B cell (primary cell): ENCODE measurements at regions of chrX and their contacts with region 1.

Region 1: GRCh38 chrX:15854712-15855567 is at the start of gene AP1S2:
- DNase-seq: peak; percentile 95
- ATAC-seq: peak; percentile 90
- H3K4me3 ChIP-seq: peak within 1 kb of the TSS; percentile 66 to 79 (median 78)
- H3K4me3 Mint-ChIP-seq: peak within 1 kb of the TSS; percentile 97
- H3K27ac ChIP-seq: peak within 1 kb of the TSS; percentile 94 to 97
- H3K27ac Mint-ChIP-seq: peak within 1 kb of the TSS; percentile 99
- H3K4me1 ChIP-seq: peaks cover 18 to 25% of the 10 kb centered on the region in 2 donors
- H3K4me1 Mint-ChIP-seq: peaks cover 36% of the 10 kb centered on the region
- H3K27me3 ChIP-seq: no peaks in the 10 kb centered on the region
- H3K27me3 Mint-ChIP-seq: no peaks in the 10 kb centered on the region
- CTCF ChIP-seq: no peak
- total RNA-seq, gene AP1S2: 33.9 and 37.8 TPM in 2 replicates

Region 2: GRCh38 chrX:15335135-15336022 is 519.6 kb before region 1 on chrX and contains the start of gene PIGA:
- CTCF ChIA-PET with region 1: no interaction called
- POLR2A ChIA-PET with region 1: no interaction called
- intact Hi-C with region 1: loop called (anchors 2 kb)
- DNase-seq: peak; percentile 94
- ATAC-seq: peak; percentile 91
- H3K4me3 ChIP-seq: peak within 1 kb of the TSS; percentile 65 to 93 (median 74)
- H3K4me3 Mint-ChIP-seq: peak within 1 kb of the TSS; percentile 92
- H3K27ac ChIP-seq: peak within 1 kb of the TSS; percentile 84 to 95
- H3K27ac Mint-ChIP-seq: peak within 1 kb of the TSS; percentile 94
- H3K4me1 ChIP-seq: peaks cover 4 to 15% of the 10 kb centered on the region in 2 donors
- H3K4me1 Mint-ChIP-seq: peaks cover 20% of the 10 kb centered on the region
- H3K27me3 ChIP-seq: peaks cover 0 to 15% (median 1%) of the 10 kb centered on the region in 4 experiments
- H3K27me3 Mint-ChIP-seq: peaks cover 8% of the 10 kb centered on the region
- CTCF ChIP-seq: no peak
- total RNA-seq, gene PIGA: 25.7 and 26.0 TPM in 2 replicates

Region 3: DNA sequence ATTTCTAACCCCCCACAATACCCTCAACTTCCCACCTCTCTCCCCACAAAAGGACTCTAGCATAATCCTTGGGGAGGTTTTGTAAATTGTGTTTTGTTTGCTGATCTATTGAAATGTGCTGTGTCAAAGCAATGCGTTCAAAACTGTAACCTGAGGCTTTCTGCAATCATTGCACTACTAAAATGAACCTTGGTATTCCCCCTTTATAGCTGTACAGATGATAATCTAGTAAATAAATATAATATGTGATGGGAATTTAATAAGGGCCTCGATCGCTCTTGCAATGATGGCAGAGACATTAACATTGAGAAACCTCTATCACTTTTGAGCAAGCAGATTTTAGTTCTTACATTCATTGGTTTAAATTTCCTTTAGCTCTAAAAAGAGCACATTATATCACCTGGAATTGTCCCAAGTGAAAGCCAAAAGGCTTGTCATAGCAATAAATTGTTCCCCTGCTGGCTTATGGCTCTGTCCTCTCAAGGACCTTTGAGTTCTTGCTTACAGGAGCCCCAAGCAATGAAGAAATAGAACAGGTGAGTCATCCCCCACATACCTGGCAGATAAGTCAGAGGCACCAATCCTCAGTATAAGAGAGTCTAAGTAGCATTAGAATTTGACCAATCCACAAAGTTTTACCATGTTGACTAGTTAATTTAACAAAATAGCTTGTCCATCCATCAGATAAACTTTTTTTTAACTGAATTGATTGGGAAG is 235.7 kb before region 1 on chrX:
- CTCF ChIA-PET with region 1: no interaction called
- POLR2A ChIA-PET with region 1: no interaction called
- intact Hi-C with region 1: no loop called
- DNase-seq: no peak
- ATAC-seq: no peak
- H3K4me3 ChIP-seq: no peak overlapping the region
- H3K4me3 Mint-ChIP-seq: no peak overlapping the region
- H3K27ac ChIP-seq: no peak overlapping the region
- H3K27ac Mint-ChIP-seq: no peak overlapping the region
- H3K4me1 ChIP-seq: no peaks in the 10 kb centered on the region
- H3K4me1 Mint-ChIP-seq: no peaks in the 10 kb centered on the region
- H3K27me3 ChIP-seq: peaks cover 0 to 5% (median 0%) of the 10 kb centered on the region in 4 experiments
- H3K27me3 Mint-ChIP-seq: no peaks in the 10 kb centered on the region
- CTCF ChIP-seq: no peak

Region 4: GRCh38 chrX:15631637-15632036 is 223.3 kb before region 1 on chrX:
- CTCF ChIA-PET with region 1: no interaction called
- POLR2A ChIA-PET with region 1: no interaction called
- intact Hi-C with region 1: no loop called
- DNase-seq: no peak
- ATAC-seq: no peak
- H3K4me3 ChIP-seq: no peak overlapping the region
- H3K4me3 Mint-ChIP-seq: no peak overlapping the region
- H3K27ac ChIP-seq: no peak overlapping the region
- H3K27ac Mint-ChIP-seq: no peak overlapping the region
- H3K4me1 ChIP-seq: no peaks in the 10 kb centered on the region
- H3K4me1 Mint-ChIP-seq: no peaks in the 10 kb centered on the region
- H3K27me3 ChIP-seq: no peaks in the 10 kb centered on the region
- H3K27me3 Mint-ChIP-seq: peaks cover 11% of the 10 kb centered on the region
- CTCF ChIP-seq: no peak

Region 5: DNA sequence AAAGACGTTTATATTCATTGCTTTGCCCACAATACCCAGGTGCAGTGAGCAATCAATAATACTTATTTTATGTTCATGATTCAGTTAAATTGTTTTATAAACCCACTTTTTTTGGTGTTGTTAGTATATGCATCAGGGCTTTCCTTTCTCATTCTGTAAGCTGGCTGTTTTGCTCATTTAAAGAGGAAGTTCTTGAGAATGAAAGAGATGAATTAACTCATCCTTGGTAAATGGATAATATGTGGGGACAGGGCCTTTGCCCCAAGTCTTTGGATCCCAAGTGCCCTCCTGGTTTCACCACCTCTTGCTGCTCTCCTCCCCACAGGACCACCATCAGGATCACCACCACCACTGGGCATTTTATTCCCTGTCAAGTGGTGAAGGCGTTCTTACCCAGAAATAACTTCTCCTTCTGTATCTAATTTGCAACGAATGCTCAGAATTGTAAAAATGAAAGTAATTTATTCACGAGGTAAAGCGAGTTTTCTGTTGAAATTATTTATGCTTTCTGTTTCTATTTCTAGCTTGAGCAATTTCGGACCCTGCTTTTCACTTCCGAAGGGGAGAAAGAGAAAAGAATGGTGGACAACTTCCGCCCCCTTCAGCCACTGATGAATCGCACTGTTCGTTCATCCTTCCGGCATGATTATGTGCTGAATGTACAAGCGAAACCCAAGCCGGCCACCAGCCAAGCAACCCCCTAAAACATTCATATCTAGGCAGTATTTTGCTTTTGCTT is 72.8 kb before region 1 on chrX:
- CTCF ChIA-PET with region 1: no interaction called
- POLR2A ChIA-PET with region 1: interaction called, 5 read pairs
- intact Hi-C with region 1: loop called (anchors 2 kb)
- DNase-seq: peak; percentile 52
- ATAC-seq: peak; percentile 70
- H3K4me3 ChIP-seq: peak overlapping the region in 4 of 5 experiments; percentile 28 to 65 (median 56)
- H3K4me3 Mint-ChIP-seq: peak overlapping the region; percentile 92
- H3K27ac ChIP-seq: peak overlapping the region; percentile 76 to 83
- H3K27ac Mint-ChIP-seq: peak overlapping the region; percentile 98
- H3K4me1 ChIP-seq: peaks cover 12 to 19% of the 10 kb centered on the region in 2 donors
- H3K4me1 Mint-ChIP-seq: peaks cover 13% of the 10 kb centered on the region
- H3K27me3 ChIP-seq: no peaks in the 10 kb centered on the region
- H3K27me3 Mint-ChIP-seq: no peaks in the 10 kb centered on the region
- CTCF ChIP-seq: no peak

Region 6: DNA sequence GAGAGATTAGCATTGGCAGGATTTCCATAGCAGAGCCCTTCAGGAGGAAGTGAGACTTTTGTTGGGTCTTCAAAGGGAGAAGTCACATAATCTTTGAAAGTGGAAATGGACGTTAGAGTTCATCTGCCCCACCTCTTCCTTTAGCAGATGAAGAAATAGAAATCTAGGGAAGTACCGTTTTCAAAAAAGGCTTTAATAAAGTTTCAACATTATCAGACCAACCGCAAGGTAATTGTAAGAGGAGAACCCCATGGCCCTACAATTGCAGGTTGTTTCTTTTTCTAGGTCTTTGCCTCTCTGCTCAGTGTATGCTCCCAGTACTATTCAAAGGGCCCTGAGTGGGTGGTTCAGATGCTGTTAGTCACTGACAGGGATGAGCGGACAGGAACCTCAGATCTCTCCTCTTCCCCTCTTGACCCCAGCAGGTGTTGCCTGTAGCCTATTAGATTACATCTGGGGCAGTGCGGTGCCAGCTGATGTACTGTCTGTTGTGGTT is 48.3 kb after region 1 on chrX:
- CTCF ChIA-PET with region 1: interaction called, 4 read pairs
- POLR2A ChIA-PET with region 1: interaction called, 4 read pairs
- intact Hi-C with region 1: loop called (anchors 1 kb)
- DNase-seq: peak; percentile 76
- ATAC-seq: peak; percentile 83
- H3K4me3 ChIP-seq: peak overlapping the region in 3 of 5 experiments; percentile 10 to 50 (median 42)
- H3K4me3 Mint-ChIP-seq: peak overlapping the region; percentile 71
- H3K27ac ChIP-seq: peak overlapping the region; percentile 76 to 88
- H3K27ac Mint-ChIP-seq: peak overlapping the region; percentile 94
- H3K4me1 ChIP-seq: peaks cover 26% of the 10 kb centered on the region in 2 donors
- H3K4me1 Mint-ChIP-seq: peaks cover 22% of the 10 kb centered on the region
- H3K27me3 ChIP-seq: no peaks in the 10 kb centered on the region
- H3K27me3 Mint-ChIP-seq: no peaks in the 10 kb centered on the region
- CTCF ChIP-seq: no peak

Region 7: GRCh38 chrX:16114611-16115010 is 259.7 kb after region 1 on chrX:
- CTCF ChIA-PET with region 1: no interaction called
- POLR2A ChIA-PET with region 1: no interaction called
- intact Hi-C with region 1: loop called (anchors 1 kb)
- DNase-seq: no peak
- ATAC-seq: peak; percentile 24
- H3K4me3 ChIP-seq: no peak overlapping the region
- H3K4me3 Mint-ChIP-seq: peak overlapping the region; percentile 53
- H3K27ac ChIP-seq: peak overlapping the region; percentile 41 to 42
- H3K27ac Mint-ChIP-seq: peak overlapping the region; percentile 79
- H3K4me1 ChIP-seq: peaks cover 22 to 24% of the 10 kb centered on the region in 2 donors
- H3K4me1 Mint-ChIP-seq: peaks cover 27% of the 10 kb centered on the region
- H3K27me3 ChIP-seq: no peaks in the 10 kb centered on the region
- H3K27me3 Mint-ChIP-seq: no peaks in the 10 kb centered on the region
- CTCF ChIP-seq: no peak

Region 8: GRCh38 chrX:16451334-16451733 is 596.4 kb after region 1 on chrX:
- CTCF ChIA-PET with region 1: no interaction called
- POLR2A ChIA-PET with region 1: no interaction called
- intact Hi-C with region 1: no loop called
- DNase-seq: no peak
- ATAC-seq: no peak
- H3K4me3 ChIP-seq: no peak overlapping the region
- H3K4me3 Mint-ChIP-seq: no peak overlapping the region
- H3K27ac ChIP-seq: no peak overlapping the region
- H3K27ac Mint-ChIP-seq: no peak overlapping the region
- H3K4me1 ChIP-seq: no peaks in the 10 kb centered on the region
- H3K4me1 Mint-ChIP-seq: no peaks in the 10 kb centered on the region
- H3K27me3 ChIP-seq: no peaks in the 10 kb centered on the region
- H3K27me3 Mint-ChIP-seq: peaks cover 3% of the 10 kb centered on the region
- CTCF ChIP-seq: no peak

Region 9: GRCh38 chrX:16870095-16870860 is 1015.3 kb after region 1 on chrX and contains the start of gene RBBP7:
- CTCF ChIA-PET with region 1: no interaction called
- POLR2A ChIA-PET with region 1: no interaction called
- intact Hi-C with region 1: loop called (anchors 5 kb)
- DNase-seq: peak; percentile 92
- ATAC-seq: peak; percentile 80
- H3K4me3 ChIP-seq: peak within 1 kb of the TSS; percentile 41 to 94 (median 79)
- H3K4me3 Mint-ChIP-seq: peak within 1 kb of the TSS; percentile 93
- H3K27ac ChIP-seq: peak within 1 kb of the TSS; percentile 96 to 99
- H3K27ac Mint-ChIP-seq: peak within 1 kb of the TSS; percentile 98
- H3K4me1 ChIP-seq: peaks cover 26 to 33% of the 10 kb centered on the region in 2 donors
- H3K4me1 Mint-ChIP-seq: peaks cover 43% of the 10 kb centered on the region
- H3K27me3 ChIP-seq: peaks cover 0 to 10% (median 0%) of the 10 kb centered on the region in 4 experiments
- H3K27me3 Mint-ChIP-seq: no peaks in the 10 kb centered on the region
- CTCF ChIP-seq: no peak
- total RNA-seq, gene RBBP7: 106 and 110 TPM in 2 replicates